ENCODE measurements at regions of chr15 and their contacts with region 1.

Region 1: DNA sequence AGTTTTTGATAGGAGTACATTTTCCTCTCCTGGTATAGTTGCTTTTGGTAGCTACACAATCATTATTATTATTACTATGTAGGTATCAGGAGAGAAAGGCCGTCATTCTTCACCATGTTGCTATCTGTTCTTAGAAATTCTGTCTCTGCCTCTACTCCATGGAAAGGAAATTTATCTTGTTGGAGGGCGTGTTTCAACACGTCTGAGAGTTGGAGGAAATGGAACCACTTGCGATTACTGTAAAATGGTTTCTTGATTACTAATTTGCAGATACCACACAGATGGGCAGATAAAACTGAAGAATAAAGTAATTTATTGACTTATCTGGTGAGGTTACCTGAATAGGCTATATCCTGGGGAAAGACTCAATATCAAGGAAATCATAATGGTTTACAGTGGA is 488.4 kb downstream of the NR2F2 start:
- DNase-seq: no peak
- ATAC-seq: no peak
- H3K4me3 ChIP-seq: no peak overlapping the region
- H3K4me3 Mint-ChIP-seq: no peak overlapping the region
- H3K27ac ChIP-seq: no peak overlapping the region
- H3K27ac Mint-ChIP-seq: no peak overlapping the region
- H3K4me1 ChIP-seq: no peaks in the 10 kb centered on the region
- H3K4me1 Mint-ChIP-seq: no peaks in the 10 kb centered on the region
- H3K27me3 ChIP-seq: no peaks in the 10 kb centered on the region
- H3K27me3 Mint-ChIP-seq: no peaks in the 10 kb centered on the region

Region 2: GRCh38 chr15:96448923-96449322 is 369.9 kb before region 1 on chr15:
- CTCF ChIA-PET with region 1: no interaction called
- POLR2A ChIA-PET with region 1: interaction called in 1 of 2 experiments, 10 read pairs
- DNase-seq: no peak
- ATAC-seq: no peak
- H3K4me3 ChIP-seq: no peak overlapping the region
- H3K4me3 Mint-ChIP-seq: no peak overlapping the region
- H3K27ac ChIP-seq: no peak overlapping the region
- H3K27ac Mint-ChIP-seq: no peak overlapping the region
- H3K4me1 ChIP-seq: no peaks in the 10 kb centered on the region
- H3K4me1 Mint-ChIP-seq: no peaks in the 10 kb centered on the region
- H3K27me3 ChIP-seq: no peaks in the 10 kb centered on the region
- H3K27me3 Mint-ChIP-seq: peaks cover 4 to 8% of the 10 kb centered on the region in 2 donors

Measured in T-cell (primary cell).